Activated naive CD4-positive, alpha-beta T cell treated with anti-CD3 and anti-CD28 coated beads for 36 hours (primary cell): ENCODE measurements at regions of chr10 and their contacts with region 1.

Region 1: DNA sequence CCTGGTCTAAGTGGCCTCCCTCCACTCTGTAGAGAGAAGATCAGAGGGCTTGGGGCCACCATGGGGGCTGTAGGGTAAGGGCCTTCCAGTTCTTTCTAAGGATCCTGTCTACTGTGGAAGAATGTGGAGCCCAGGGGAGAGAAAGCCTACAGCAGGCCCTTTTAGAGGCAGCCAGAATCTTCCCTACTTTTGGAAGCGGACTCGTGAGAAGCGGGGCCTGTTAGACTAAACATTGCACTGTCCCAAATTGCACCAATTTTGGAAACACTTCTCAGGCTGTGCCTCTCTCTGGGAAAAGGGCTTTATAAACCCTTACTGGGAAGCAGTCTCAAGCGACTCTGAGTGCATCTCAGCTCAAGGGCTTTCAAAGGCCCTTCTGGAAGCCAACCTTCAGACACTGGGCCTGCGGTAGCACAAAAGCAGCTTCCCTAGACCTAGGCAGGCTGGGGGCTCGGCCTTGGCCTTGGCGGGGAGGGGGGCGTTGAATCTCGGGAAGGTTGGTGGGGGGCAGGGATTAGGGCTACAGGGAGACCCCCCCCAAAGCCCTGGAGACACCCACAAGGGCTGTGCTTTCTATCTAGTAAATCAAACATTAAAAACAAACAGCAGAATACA is 298.1 kb downstream of the GFRA1 start:
- DNase-seq: no peak
- H3K4me3 Mint-ChIP-seq: no peak overlapping the region
- H3K27ac Mint-ChIP-seq: no peak overlapping the region
- H3K4me1 Mint-ChIP-seq: no peaks in the 10 kb centered on the region
- H3K27me3 Mint-ChIP-seq: peaks cover 5% of the 10 kb centered on the region

Region 2: DNA sequence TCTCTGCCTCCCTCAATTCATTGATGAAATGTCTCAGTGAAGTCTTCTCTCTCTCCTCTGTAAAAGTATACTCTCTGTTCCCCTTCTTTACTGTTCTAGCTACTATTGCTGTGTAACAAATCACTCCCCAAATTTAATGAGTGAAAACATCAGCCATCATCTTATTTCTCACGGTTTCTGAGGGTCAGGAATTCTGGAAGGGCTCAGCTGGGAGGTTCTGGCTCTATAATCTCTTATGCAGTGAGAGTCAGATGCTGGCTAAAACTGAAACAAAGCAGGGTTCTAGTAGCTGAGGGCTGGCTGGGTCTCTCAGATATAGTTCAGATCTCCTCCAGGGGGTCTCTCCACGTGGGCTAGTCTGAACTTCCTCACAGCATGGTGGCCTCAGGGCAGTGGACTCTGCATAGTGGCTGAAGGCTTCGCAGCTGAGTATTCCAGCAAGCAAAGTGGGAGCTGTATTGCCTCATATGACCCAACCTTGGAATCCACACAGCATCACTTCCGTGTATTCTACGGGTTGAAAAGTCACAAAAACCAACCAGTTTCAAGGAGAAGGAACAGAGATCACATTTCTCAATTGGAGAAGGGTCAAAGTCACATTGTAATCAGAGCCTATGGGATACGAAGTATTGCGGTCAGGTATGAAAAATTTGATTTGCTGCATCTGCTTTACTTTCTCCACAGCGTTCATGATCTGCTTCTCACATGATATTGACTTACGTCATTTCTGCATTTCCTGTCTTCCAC is 956.6 kb before region 1 on chr10:
- CTCF ChIA-PET with region 1: no interaction called
- intact Hi-C with region 1: loop called (anchors 5 kb)
- DNase-seq: no peak
- H3K4me3 Mint-ChIP-seq: no peak overlapping the region
- H3K27ac Mint-ChIP-seq: no peak overlapping the region
- H3K4me1 Mint-ChIP-seq: no peaks in the 10 kb centered on the region
- H3K27me3 Mint-ChIP-seq: peaks cover 13% of the 10 kb centered on the region

Region 3: DNA sequence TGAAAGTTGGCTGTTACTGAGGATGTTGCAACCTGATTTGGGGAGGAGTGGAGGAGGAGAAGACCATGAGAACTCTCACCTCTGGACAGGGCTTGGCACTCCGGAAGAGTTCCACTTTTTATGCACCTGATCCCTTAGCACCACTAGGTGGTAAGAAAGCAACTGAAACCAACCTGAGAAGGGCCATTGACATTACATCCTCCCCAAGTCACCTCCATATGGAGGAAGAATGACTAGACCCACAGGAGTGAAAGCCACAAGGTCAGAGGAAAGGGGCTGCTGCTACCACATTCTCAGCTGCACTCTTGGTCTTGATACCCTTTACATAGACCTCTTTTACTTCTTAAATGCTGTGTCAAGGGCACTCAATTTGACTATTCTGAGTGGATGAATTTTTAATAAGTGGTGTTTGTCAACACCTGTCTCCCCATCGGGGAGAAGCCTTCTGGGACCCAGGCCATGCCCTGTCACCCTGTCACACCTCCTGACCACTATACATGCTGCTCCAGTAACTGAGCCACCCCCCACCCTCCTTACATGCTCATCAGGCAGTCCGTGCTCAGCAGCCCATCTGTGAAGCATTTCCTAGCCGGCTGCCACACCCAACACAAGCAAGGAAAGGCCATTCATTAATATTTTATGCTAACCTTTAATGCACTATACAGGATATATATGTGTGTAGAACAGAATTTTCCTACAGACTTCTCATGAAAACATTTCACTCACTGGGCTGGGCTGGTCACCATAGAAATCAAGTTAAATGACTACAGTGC is 64.8 kb before region 1 on chr10:
- CTCF ChIA-PET with region 1: no interaction called
- intact Hi-C with region 1: no loop called
- DNase-seq: no peak
- H3K4me3 Mint-ChIP-seq: no peak overlapping the region
- H3K27ac Mint-ChIP-seq: no peak overlapping the region
- H3K4me1 Mint-ChIP-seq: no peaks in the 10 kb centered on the region
- H3K27me3 Mint-ChIP-seq: no peaks in the 10 kb centered on the region

Region 4: DNA sequence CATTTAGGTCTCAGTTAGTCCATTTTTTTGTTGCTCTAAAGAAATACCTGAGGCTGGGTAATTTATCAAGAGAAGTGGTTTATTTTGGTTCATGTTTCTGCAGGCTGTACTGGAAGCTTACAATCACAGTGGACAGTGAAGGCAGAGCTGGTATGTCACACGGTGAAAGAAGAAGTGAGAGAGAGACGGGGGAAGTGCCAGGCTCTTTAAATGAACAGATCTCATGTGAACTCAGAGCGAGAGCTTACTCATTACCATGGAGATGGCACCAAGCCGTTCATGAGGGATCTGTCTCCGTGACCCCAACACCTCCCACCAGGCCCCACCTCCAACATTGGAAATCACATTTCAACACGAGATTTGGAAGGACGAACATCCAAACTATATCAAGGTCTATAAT is 433.8 kb after region 1 on chr10:
- CTCF ChIA-PET with region 1: no interaction called
- intact Hi-C with region 1: no loop called
- DNase-seq: no peak
- H3K4me3 Mint-ChIP-seq: no peak overlapping the region
- H3K27ac Mint-ChIP-seq: no peak overlapping the region
- H3K4me1 Mint-ChIP-seq: no peaks in the 10 kb centered on the region
- H3K27me3 Mint-ChIP-seq: peaks cover 11% of the 10 kb centered on the region